Activated CD8-positive, alpha-beta T cell treated with anti-CD3 and anti-CD28 coated beads, Interleukin-2, amount 10 ng/mL, durations not matched to agents 7 days and 5 days (primary cell): ENCODE measurements at regions of chr6 and their contacts with region 1.

Region 1: DNA sequence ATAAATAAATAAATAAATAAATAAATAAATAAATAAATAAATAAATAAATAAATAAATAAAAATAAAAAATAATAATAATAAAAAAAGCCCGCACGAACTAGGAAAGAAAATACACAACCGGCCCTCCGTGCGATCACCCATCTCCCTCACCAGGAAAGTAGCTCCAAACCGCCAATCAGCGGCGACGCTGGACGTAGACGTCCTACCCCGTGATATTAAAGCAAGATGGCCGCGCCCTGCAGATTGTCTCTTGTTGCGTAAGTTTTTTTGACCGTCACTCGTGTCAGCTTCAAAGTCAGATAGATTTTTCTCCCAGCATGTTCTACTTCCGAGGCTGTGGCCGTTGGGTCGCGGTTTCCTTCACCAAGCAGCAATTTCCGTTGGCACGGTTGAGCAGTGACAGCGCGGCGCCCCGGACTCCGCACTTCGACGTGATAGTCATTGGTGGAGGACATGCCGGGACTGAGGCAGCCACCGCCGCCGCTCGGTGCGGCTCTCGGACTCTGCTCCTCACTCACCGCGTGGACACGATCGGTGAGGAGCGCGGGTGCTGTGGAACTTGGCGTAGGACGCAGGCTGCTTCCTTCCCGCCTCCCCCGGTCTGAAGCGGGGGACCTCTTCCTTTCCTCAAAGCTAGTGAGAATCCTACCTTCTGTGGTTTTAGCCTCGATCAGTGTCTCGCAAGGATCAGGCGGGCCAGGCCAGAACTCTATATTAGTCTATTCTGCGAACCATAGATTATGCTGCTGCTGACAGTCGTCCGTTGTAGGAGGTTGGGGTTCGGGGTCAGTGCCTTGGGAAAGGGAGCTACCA is at the start of gene MTO1:
- DNase-seq: peak; percentile 92
- ATAC-seq: peak; percentile 91
- H3K4me3 Mint-ChIP-seq: peak within 1 kb of the TSS; percentile 94
- H3K27ac Mint-ChIP-seq: peak within 1 kb of the TSS; percentile 98
- H3K4me1 Mint-ChIP-seq: peaks cover 51% of the 10 kb centered on the region
- H3K27me3 Mint-ChIP-seq: no peaks in the 10 kb centered on the region
- total RNA-seq, gene MTO1: 51.7 to 54.3 TPM

Region 2: DNA sequence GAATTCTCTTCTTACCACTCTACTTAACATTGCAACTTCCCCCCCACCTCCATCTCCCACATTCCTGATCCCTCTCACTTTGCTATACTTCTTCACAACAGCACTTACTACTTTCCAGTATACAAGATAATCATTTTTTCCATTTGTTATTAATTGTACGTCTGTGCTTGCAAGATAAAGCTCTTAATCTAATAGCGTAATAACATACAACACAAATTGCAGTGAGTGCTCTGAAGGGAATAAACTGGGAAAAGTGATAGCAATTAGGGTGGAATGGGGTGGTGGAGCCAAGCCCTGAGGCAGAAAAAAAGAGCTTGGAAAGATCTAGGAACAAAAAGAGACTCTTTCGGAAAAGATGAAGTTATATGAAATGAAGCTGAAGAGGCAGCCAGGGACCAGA is 18.2 kb before region 1 on chr6:
- CTCF ChIA-PET with region 1: interaction called, 6 read pairs
- POLR2A ChIA-PET with region 1: interaction called, 15 read pairs
- DNase-seq: no peak
- ATAC-seq: no peak
- H3K4me3 Mint-ChIP-seq: no peak overlapping the region
- H3K27ac Mint-ChIP-seq: no peak overlapping the region
- H3K4me1 Mint-ChIP-seq: peaks cover 50% of the 10 kb centered on the region
- H3K27me3 Mint-ChIP-seq: no peaks in the 10 kb centered on the region

Region 3: GRCh38 chr6:73471686-73472290 is 10.0 kb after region 1 on chr6:
- CTCF ChIA-PET with region 1: interaction called, 12 read pairs
- POLR2A ChIA-PET with region 1: interaction called, 38 read pairs
- DNase-seq: no peak
- ATAC-seq: no peak
- H3K4me3 Mint-ChIP-seq: peak overlapping the region; percentile 29
- H3K27ac Mint-ChIP-seq: peak overlapping the region; percentile 85
- H3K4me1 Mint-ChIP-seq: peaks cover 18% of the 10 kb centered on the region
- H3K27me3 Mint-ChIP-seq: no peaks in the 10 kb centered on the region

Region 4: GRCh38 chr6:73520688-73521350 is 59.1 kb after region 1 on chr6 and contains the start of gene EEF1A1:
- CTCF ChIA-PET with region 1: interaction called, 9 read pairs
- POLR2A ChIA-PET with region 1: interaction called, 69 read pairs
- DNase-seq: peak; percentile 100
- ATAC-seq: peak; percentile 75
- H3K4me3 Mint-ChIP-seq: peak within 1 kb of the TSS; percentile 87
- H3K27ac Mint-ChIP-seq: peak within 1 kb of the TSS; percentile 95
- H3K4me1 Mint-ChIP-seq: peaks cover 45% of the 10 kb centered on the region
- H3K27me3 Mint-ChIP-seq: no peaks in the 10 kb centered on the region
- total RNA-seq, gene EEF1A1: 7,075 to 7,486 TPM

Region 5: DNA sequence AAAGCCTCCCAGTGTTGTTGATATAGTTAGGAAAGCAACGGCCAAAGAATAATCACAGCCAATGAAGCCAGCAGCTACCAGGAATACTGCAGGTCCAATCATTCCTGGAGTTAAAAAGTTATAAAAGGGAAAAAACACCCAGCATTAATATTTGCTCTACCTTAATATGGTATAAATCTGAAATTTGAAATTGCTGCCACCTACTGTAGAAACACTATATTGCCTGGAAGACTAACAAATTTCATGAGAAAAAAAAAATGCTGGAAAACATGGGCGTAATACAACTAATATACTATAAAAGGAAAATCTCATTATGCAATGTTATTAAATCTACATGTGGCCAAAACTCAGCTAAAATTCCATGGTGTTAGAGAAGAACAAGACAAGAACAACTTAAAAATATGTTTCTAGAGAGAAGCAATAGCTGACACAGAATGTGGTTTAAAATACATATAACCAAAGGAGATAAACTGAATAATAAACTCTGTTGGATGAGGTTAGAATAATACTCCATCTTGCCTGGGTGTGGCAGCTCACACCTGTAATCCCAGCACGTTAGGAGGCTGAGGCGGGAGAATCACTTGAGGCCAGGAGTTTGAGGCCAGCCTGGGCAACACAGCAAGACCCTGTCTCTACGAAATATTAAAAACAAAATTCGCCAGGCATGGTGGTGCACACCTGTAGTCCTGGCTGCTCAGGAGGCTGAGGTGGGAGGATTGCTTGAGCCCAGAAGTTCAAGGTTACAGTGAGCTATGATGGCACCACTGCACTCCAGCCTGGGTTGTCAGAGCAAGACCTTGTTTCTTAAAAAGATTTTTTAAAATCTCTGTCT is 148.9 kb after region 1 on chr6:
- CTCF ChIA-PET with region 1: no interaction called
- POLR2A ChIA-PET with region 1: no interaction called
- DNase-seq: no peak
- ATAC-seq: no peak
- H3K4me3 Mint-ChIP-seq: no peak overlapping the region
- H3K27ac Mint-ChIP-seq: no peak overlapping the region
- H3K4me1 Mint-ChIP-seq: no peaks in the 10 kb centered on the region
- H3K27me3 Mint-ChIP-seq: no peaks in the 10 kb centered on the region

Region 6: DNA sequence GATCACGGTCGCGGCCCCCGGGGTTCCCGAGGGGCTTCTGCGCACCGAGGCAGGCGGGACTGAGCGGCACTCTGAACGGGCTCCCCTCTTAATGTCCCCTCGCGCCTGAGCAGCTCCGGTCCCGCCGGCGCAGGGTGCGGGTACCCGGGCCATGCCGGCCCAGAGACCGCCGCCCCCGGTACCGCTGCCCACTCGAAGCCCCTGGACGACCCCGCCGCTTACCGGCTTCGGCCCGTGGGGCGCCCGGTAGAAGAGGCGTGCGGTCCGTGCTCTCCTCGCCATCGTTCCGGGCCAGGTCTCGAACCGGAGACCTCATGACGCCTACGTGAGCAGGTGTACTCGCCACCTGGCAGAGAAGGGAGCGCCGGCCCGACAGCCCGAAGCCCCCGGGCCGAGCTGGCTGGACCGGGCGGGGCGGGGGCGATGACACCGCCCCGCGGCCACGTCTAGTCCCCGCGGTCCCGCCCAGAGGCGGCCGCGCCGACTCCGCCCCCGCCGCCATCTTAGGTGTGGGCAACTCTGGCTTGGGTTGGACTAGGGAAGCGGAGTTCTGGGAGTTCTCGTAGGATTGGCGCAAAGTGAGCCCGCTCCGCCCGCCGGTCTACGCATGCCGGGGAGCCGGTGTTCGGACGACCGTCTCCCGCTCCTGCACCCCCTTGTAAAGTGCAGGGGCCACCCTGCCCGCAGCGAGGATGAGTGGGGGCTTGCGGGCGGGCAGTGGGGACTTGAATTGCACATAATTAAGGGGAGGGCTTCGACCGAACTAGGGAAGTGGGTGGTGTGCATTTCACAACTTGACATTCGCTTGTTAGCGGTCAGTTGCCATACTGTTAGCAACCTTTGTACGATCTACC is 192.1 kb after region 1 on chr6 and contains the start of gene SLC17A5:
- CTCF ChIA-PET with region 1: interaction called, 17 read pairs
- POLR2A ChIA-PET with region 1: interaction called, 4 read pairs
- DNase-seq: peak; percentile 93
- ATAC-seq: peak; percentile 91
- H3K4me3 Mint-ChIP-seq: peak within 1 kb of the TSS; percentile 99
- H3K27ac Mint-ChIP-seq: peak within 1 kb of the TSS; percentile 97
- H3K4me1 Mint-ChIP-seq: peaks cover 22% of the 10 kb centered on the region
- H3K27me3 Mint-ChIP-seq: no peaks in the 10 kb centered on the region
- total RNA-seq, gene SLC17A5: 5.0 to 5.7 TPM